ENCODE measurements at regions of chr2 and their contacts with region 1.

Region 1: DNA sequence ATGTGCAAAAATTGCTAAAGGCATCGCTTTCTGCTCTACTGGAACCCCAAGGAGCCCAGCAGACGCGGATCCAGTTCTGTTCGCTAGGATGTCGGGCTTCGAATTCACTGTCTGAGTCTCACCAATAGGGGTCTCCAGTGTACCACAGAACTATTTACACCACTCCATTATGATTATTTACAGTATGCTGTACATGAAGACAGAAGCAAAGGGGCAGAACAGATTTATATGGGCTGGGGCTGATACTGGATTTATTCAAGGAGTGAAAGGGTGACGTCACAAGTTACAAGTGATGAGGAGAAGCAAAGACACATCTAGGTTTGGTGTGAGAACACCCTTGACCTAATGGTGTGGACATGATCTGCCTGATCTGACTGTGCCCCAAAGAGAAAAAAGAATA is 185.3 kb upstream of the ATP5MC3 start:
- DNase-seq: peak; percentile 10 to 53
- H3K4me3 ChIP-seq: no peak overlapping the region
- H3K27ac ChIP-seq: no peak overlapping the region
- H3K4me1 ChIP-seq: no peaks in the 10 kb centered on the region; a peak in 1 of 7 replicates
- H3K27me3 ChIP-seq: no peaks in the 10 kb centered on the region
- CTCF ChIP-seq: peak; percentile 51 to 89 (median 85)
- EP300 ChIP-seq: no peak
- POLR2A ChIP-seq: no peak
- RAD21 ChIP-seq: peak; percentile 92 to 93

Region 2: DNA sequence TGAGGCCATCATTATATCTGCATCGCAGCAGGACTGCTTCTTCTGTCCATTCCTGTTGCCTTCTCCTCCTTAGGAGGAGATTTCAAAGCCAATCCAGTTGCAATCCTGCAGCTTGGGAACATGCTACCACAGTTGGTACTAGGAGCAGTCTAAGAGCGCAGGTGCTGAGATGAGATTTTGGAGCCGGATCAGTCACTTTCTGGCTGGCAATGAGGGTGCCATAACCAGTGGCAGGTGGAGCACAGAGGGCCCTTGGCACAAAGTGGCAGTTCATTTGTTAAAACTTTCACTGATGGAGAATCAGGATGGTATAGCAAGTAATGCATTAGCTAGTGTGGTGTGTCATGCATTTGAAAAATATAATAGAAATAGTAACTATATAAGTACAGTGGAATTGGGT is 11.6 kb before region 1 on chr2:
- CTCF ChIA-PET with region 1: interaction called, 12 read pairs
- POLR2A ChIA-PET with region 1: interaction called, 4 read pairs
- DNase-seq: no peak
- H3K4me3 ChIP-seq: no peak overlapping the region
- H3K27ac ChIP-seq: no peak overlapping the region
- H3K4me1 ChIP-seq: no peaks in the 10 kb centered on the region
- H3K27me3 ChIP-seq: no peaks in the 10 kb centered on the region
- CTCF ChIP-seq: no peak
- EP300 ChIP-seq: no peak
- POLR2A ChIP-seq: no peak
- RAD21 ChIP-seq: no peak

Region 3: GRCh38 chr2:175383286-175383685 is 16.5 kb after region 1 on chr2:
- CTCF ChIA-PET with region 1: no interaction called
- POLR2A ChIA-PET with region 1: no interaction called
- DNase-seq: no peak
- H3K4me3 ChIP-seq: no peak overlapping the region
- H3K27ac ChIP-seq: no peak overlapping the region
- H3K4me1 ChIP-seq: no peaks in the 10 kb centered on the region
- H3K27me3 ChIP-seq: no peaks in the 10 kb centered on the region
- CTCF ChIP-seq: no peak
- EP300 ChIP-seq: no peak
- POLR2A ChIP-seq: no peak
- RAD21 ChIP-seq: no peak

Region 4: DNA sequence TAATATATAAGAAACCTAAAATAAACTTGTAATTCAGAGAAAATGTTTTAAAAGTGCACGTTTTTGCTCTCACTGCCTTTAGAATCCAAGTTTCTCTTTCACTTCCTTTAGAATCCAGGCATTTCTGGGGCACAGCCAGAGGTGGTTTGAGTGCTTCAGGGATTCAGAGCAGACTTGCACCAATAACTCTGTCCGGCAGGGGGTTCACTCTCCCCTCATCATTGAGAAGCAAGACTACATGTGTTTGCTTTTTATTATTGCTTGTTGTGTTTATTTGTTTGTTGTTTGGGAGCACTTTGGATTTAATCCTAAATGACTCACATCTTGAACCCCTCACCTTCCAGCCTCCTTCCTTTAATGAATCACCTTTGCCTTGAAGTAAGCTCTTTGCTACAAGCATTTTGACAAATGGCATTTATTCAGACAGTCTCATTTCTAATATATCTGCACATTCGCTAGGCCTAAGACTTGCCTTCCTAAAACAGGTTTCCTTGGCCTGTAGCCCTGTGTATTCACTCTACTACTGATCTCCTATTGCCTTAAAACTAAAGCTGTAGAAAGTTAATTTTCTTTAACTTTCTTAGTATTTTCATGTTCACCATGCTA is 48.2 kb after region 1 on chr2:
- CTCF ChIA-PET with region 1: interaction called, 15 read pairs
- POLR2A ChIA-PET with region 1: no interaction called
- DNase-seq: peak; percentile 50 to 65
- H3K4me3 ChIP-seq: no peak overlapping the region
- H3K27ac ChIP-seq: no peak overlapping the region
- H3K4me1 ChIP-seq: no peaks in the 10 kb centered on the region
- H3K27me3 ChIP-seq: no peaks in the 10 kb centered on the region
- CTCF ChIP-seq: peak; percentile 43 to 73 (median 52)
- EP300 ChIP-seq: no peak
- POLR2A ChIP-seq: no peak
- RAD21 ChIP-seq: peak; percentile 71 to 76

Region 5: GRCh38 chr2:175450029-175450760 is 83.4 kb after region 1 on chr2:
- CTCF ChIA-PET with region 1: no interaction called
- POLR2A ChIA-PET with region 1: no interaction called
- DNase-seq: no peak
- H3K4me3 ChIP-seq: no peak overlapping the region
- H3K27ac ChIP-seq: no peak overlapping the region
- H3K4me1 ChIP-seq: no peaks in the 10 kb centered on the region
- H3K27me3 ChIP-seq: no peaks in the 10 kb centered on the region
- CTCF ChIP-seq: no peak
- EP300 ChIP-seq: no peak
- POLR2A ChIP-seq: no peak
- RAD21 ChIP-seq: no peak

Region 6: GRCh38 chr2:175684457-175684856 is 317.6 kb after region 1 on chr2:
- CTCF ChIA-PET with region 1: interaction called, 21 read pairs
- POLR2A ChIA-PET with region 1: no interaction called
- DNase-seq: peak in 1 of 2 experiments; percentile 10
- H3K4me3 ChIP-seq: no peak overlapping the region
- H3K27ac ChIP-seq: no peak overlapping the region
- H3K4me1 ChIP-seq: no peaks in the 10 kb centered on the region
- H3K27me3 ChIP-seq: no peaks in the 10 kb centered on the region
- CTCF ChIP-seq: peak in 1 of 3 experiments; percentile 20; a peak in 1 of 4 replicates
- EP300 ChIP-seq: no peak
- POLR2A ChIP-seq: no peak
- RAD21 ChIP-seq: peak; percentile 23 to 36; a peak in 3 of 4 replicates

Region 7: GRCh38 chr2:175824243-175824642 is 457.4 kb after region 1 on chr2:
- CTCF ChIA-PET with region 1: no interaction called
- POLR2A ChIA-PET with region 1: no interaction called
- DNase-seq: no peak
- H3K4me3 ChIP-seq: no peak overlapping the region
- H3K27ac ChIP-seq: no peak overlapping the region
- H3K4me1 ChIP-seq: peaks cover 0 to 4% (median 1%) of the 10 kb centered on the region in 4 experiments; a peak in 2 of 7 replicates
- H3K27me3 ChIP-seq: no peaks in the 10 kb centered on the region
- CTCF ChIP-seq: no peak
- EP300 ChIP-seq: no peak
- POLR2A ChIP-seq: no peak
- RAD21 ChIP-seq: no peak

Region 8: DNA sequence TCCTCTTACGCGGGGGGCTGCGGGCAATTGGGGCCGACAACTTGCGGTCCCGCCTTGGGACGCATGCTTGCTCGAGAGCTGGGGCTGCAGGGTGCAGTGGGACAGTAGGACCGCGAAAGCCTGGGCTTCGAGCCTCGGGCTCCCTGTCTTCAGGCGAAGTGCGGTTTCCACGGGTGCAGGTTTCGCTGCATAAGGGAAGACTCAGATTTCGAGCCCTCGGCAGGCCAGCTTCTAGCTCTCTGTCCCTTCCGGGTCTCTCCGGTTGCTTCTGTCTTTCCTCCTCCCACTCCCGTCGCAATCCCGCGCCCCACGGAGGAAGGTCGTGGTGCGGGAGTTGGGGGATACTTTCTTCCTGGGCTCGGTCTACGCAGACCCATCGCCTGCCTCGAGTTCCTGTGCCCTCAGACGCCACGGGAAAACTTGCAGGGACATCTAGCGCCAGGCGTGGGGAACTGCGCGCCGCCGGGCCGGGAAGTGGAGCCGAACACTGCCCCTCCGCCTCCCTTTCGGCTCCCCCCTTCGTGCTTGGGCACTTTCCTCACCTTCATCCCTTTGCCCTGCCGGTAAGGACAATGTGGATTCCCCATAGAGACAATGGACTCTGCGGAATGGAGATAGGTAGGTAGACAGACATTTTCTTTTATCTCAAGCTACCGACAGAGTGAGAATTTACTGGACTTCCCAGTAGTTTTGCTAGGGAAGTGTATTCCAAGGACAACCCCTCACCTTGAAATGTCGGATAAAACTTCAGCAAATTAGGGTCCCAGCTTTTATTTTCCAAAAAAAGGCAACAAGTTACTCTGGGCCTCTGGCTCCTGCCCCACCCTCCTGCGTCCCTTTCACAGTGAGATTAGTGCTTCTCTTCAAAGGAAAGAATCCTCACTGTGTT is 721.5 kb after region 1 on chr2:
- CTCF ChIA-PET with region 1: interaction called, 10 read pairs
- POLR2A ChIA-PET with region 1: no interaction called
- DNase-seq: peak in 1 of 2 experiments; percentile 80
- H3K4me3 ChIP-seq: peak overlapping the region in 3 of 4 experiments; percentile 28 to 55 (median 34); a peak in 5 of 8 replicates
- H3K27ac ChIP-seq: no peak overlapping the region
- H3K4me1 ChIP-seq: peaks cover 0 to 15% (median 8%) of the 10 kb centered on the region in 4 experiments; a peak in 6 of 7 replicates
- H3K27me3 ChIP-seq: peaks cover 94 to 100% (median 99%) of the 10 kb centered on the region in 4 experiments
- CTCF ChIP-seq: peak in 2 of 3 experiments; percentile 42 to 64; a peak in 3 of 4 replicates
- EP300 ChIP-seq: no peak
- POLR2A ChIP-seq: no peak
- RAD21 ChIP-seq: peak; percentile 48 to 61

Region 9: GRCh38 chr2:176096986-176097819 is 730.4 kb after region 1 on chr2:
- CTCF ChIA-PET with region 1: interaction called, 16 read pairs
- POLR2A ChIA-PET with region 1: no interaction called
- DNase-seq: peak; percentile 86 to 91
- H3K4me3 ChIP-seq: peak overlapping the region; percentile 1 to 54 (median 22); a peak in 6 of 8 replicates
- H3K27ac ChIP-seq: no peak overlapping the region
- H3K4me1 ChIP-seq: peaks cover 0 to 28% (median 16%) of the 10 kb centered on the region in 4 experiments; a peak in 6 of 7 replicates
- H3K27me3 ChIP-seq: peaks cover 79 to 98% (median 91%) of the 10 kb centered on the region in 4 experiments
- CTCF ChIP-seq: peak in 2 of 3 experiments; percentile 89 to 90; a peak in 3 of 4 replicates
- EP300 ChIP-seq: no peak
- POLR2A ChIP-seq: no peak
- RAD21 ChIP-seq: peak; percentile 93 to 95

Measured in H1 (cell line).